ENCODE measurements at regions of chr3 and their contacts with region 1.

Region 1: GRCh38 chr3:187368251-187369088 is at the start of gene RTP4:
- DNase-seq: peak; percentile 57
- H3K4me3 Mint-ChIP-seq: peak within 1 kb of the TSS; percentile 82
- H3K27ac Mint-ChIP-seq: peak within 1 kb of the TSS; percentile 88
- H3K4me1 Mint-ChIP-seq: peaks cover 18% of the 10 kb centered on the region
- H3K27me3 Mint-ChIP-seq: no peaks in the 10 kb centered on the region
- total RNA-seq, gene RTP4: 0.43 to 0.81 TPM

Region 2: DNA sequence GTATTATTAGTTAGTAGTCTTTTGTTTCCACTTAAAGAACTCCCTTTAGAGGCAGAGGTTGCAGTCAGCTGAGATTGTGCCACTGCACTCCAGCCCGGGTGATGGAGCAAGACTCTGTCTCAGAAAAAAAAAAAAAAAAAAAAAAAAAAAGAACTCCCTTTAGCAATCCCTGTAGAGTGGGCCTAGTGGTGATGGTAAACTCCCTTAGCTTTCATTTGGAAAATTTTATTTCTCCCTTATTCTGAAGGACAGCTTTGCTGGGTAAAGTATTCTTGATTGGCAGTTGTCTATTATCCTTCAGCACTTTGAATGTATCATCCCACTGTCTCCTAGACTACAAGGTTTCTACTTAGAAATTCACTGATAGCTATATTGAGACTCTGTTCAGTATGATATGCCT is 275.1 kb before region 1 on chr3:
- CTCF ChIA-PET with region 1: no interaction called
- intact Hi-C with region 1: no loop called
- DNase-seq: no peak
- H3K4me3 Mint-ChIP-seq: no peak overlapping the region
- H3K27ac Mint-ChIP-seq: no peak overlapping the region
- H3K4me1 Mint-ChIP-seq: peaks cover 6% of the 10 kb centered on the region
- H3K27me3 Mint-ChIP-seq: no peaks in the 10 kb centered on the region

Region 3: DNA sequence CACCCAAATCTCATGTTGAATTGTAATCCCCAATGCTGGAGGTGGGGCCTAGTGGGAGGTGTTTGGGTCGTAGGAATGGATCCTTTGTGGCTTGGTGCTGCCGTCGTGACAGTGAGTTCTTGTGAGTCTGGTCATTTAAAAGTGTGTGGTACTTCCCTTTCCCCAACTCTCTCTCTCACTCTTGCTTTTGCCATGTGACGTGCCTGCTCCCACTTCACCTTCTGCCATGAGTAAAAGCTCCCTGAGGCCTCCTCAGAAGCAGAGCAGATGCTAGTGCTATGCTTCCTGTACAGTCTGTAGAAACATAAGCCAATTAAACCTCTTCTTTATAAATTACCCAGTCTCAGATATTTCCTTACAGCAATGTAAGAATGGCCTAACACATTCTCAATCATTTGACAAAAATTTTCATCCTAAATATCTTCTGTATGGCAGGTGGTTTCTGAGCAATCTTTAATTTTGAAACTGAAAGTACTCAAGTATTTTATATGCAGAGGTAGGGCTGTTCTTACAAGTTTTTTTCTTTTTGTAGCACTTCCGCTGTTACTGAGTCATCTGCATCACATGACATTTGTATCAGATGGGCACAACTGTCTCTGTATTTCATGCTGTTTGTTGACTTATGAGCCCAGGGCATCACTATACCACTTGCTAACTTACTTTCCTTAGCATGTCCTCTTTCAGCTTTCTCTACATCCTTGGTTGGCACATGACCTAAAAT is 238.0 kb before region 1 on chr3:
- CTCF ChIA-PET with region 1: no interaction called
- intact Hi-C with region 1: loop called (anchors 5 kb)
- DNase-seq: peak; percentile 64
- H3K4me3 Mint-ChIP-seq: peak overlapping the region; percentile 42
- H3K27ac Mint-ChIP-seq: peak overlapping the region; percentile 98
- H3K4me1 Mint-ChIP-seq: peaks cover 40% of the 10 kb centered on the region
- H3K27me3 Mint-ChIP-seq: no peaks in the 10 kb centered on the region